Endothelial cell of umbilical vein (primary cell): ENCODE measurements at regions of chr7 and their contacts with region 1.

Region 1: GRCh38 chr7:27662490-27663205 is at the start of gene HIBADH:
- DNase-seq: peak; percentile 99
- H3K4me3 ChIP-seq: peak within 1 kb of the TSS; percentile 63 to 83 (median 69)
- H3K27ac ChIP-seq: peak within 1 kb of the TSS; percentile 74
- H3K4me1 ChIP-seq: peaks cover 7% of the 10 kb centered on the region
- H3K27me3 ChIP-seq: no peaks in the 10 kb centered on the region
- CTCF ChIP-seq: no peak
- POLR2A ChIP-seq: peak; percentile 70
- total RNA-seq, gene HIBADH: 19.7 and 22.6 TPM in 2 replicates

Region 2: DNA sequence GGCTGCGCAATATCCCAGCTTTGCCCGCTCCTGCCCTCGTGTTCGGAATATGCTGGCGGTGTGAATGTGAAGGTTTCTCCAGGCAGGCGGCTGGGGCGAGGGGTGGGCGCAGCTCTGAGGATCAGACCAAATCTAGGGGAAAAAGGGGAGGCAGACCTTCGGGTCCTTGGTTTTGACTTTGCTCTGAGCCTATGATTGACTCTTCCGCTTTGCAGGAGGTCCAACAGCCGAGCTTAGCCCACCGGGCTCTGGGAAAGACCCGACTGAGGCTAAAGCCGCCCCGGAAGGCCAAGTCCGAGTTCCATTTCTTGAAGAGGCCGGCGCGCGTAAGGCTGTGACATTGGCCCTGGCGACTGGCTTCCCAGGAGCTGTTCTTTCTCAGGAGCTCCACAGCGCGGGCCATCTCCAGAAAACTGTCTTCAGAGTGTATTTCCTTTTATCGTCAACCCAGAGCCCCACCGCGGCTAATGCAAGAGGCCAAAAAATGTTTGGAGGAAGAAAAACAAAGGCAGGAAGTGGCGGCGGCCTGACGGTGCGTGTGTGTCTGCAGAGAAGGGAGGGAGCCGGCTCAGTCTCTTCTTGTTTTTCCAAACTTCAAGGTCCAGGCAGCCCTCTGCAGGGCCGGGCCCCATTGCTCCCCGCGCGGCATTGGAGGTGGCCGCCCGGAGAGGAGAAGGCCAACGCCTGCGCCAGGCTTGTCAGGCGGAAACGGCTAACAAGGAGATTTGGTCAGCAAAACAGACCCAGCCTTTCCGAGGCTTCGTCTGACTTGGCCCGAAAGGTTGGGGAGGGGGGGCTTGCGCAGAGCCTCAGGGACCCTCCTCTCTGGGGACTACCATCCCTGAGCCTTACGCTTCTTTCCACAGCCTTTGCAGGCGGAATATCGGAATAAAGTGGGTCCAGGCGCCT is 474.0 kb before region 1 on chr7:
- CTCF ChIA-PET with region 1: no interaction called
- POLR2A ChIA-PET with region 1: no interaction called
- dilution Hi-C with region 1: no loop called
- intact Hi-C with region 1: loop called (anchors 2 kb)
- DNase-seq: peak; percentile 81
- H3K4me3 ChIP-seq: peak overlapping the region; percentile 6 to 48 (median 44)
- H3K27ac ChIP-seq: peak overlapping the region; percentile 90
- H3K4me1 ChIP-seq: peaks cover 50% of the 10 kb centered on the region
- H3K27me3 ChIP-seq: peaks cover 2 to 7% of the 10 kb centered on the region in 2 experiments
- CTCF ChIP-seq: no peak
- POLR2A ChIP-seq: peak; percentile 53

Region 3: DNA sequence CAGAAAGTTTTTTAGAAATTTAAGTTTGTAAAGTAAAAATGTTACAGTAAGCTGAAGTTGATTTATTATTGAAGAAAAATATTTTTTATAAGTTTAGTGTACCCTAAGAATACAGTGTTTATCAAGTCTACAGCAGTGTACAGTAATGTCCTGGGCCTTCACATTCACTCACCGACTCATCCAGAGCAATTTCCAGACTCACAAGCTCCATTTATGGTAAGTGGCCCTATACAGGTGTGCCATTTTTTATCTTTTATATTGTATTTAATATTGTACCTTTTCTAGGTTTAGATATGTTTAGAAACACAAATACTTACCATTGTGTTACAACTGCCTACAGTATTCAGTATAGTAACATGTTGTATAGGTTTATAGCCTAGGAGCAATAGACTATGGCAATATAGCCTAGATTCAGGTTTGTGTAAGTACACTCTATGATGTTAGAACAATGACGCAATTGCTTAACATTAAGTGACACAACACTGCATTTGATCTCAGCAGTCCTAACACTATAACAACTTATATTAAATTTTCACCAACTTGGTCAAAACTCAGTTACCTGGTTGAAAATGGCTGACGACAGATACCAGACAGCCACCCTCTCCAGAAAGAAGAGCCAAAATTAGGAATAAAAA is 45.6 kb before region 1 on chr7:
- CTCF ChIA-PET with region 1: no interaction called
- POLR2A ChIA-PET with region 1: no interaction called
- dilution Hi-C with region 1: no loop called
- intact Hi-C with region 1: no loop called
- DNase-seq: no peak
- H3K4me3 ChIP-seq: no peak overlapping the region
- H3K27ac ChIP-seq: no peak overlapping the region
- H3K4me1 ChIP-seq: no peaks in the 10 kb centered on the region
- H3K27me3 ChIP-seq: no peaks in the 10 kb centered on the region
- CTCF ChIP-seq: no peak
- POLR2A ChIP-seq: no peak

Region 4: GRCh38 chr7:27640914-27641580 is 21.6 kb before region 1 on chr7:
- CTCF ChIA-PET with region 1: interaction called, 3 read pairs
- POLR2A ChIA-PET with region 1: no interaction called
- dilution Hi-C with region 1: no loop called
- intact Hi-C with region 1: loop called (anchors 1 kb)
- DNase-seq: peak; percentile 96
- H3K4me3 ChIP-seq: peak overlapping the region in 1 of 3 experiments; percentile 36
- H3K27ac ChIP-seq: peak overlapping the region; percentile 85
- H3K4me1 ChIP-seq: peaks cover 18% of the 10 kb centered on the region
- H3K27me3 ChIP-seq: no peaks in the 10 kb centered on the region
- CTCF ChIP-seq: no peak
- POLR2A ChIP-seq: no peak

Region 5: GRCh38 chr7:27677912-27678612 is 15.4 kb after region 1 on chr7:
- CTCF ChIA-PET with region 1: interaction called, 6 read pairs
- POLR2A ChIA-PET with region 1: no interaction called
- dilution Hi-C with region 1: no loop called
- intact Hi-C with region 1: loop called (anchors 1 kb)
- DNase-seq: peak; percentile 78
- H3K4me3 ChIP-seq: no peak overlapping the region
- H3K27ac ChIP-seq: peak overlapping the region; percentile 94
- H3K4me1 ChIP-seq: peaks cover 22% of the 10 kb centered on the region
- H3K27me3 ChIP-seq: no peaks in the 10 kb centered on the region
- CTCF ChIP-seq: no peak
- POLR2A ChIP-seq: peak; percentile 25

Region 6: DNA sequence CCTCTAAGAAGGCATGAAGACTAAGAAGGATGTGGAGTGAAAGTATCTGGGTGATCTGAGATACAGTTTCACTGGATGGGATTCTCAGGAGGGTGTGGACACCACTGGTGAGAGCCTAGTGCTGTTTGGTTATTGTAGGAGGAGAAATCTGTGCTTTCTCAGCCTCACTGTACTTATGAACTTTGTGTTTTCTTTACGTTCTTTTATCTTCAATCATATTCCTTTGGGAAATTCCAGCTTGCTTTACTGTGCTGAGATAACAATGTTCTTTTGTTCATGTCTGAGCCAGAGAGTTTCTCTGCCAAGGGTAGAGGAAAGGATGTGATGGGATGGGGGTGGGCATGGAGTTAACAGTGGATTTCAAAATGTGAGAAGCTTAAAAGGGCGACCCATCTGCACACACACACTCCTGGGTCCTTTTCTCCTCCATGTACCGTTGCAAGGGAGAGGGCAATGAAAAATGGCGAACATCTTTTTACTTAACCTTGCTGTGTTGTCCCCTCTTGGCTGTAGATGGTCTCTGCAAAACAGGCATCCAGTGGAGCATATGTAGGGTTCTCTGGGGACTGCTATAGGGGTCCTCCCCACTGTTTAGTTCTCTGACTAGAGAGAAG is 52.3 kb after region 1 on chr7:
- CTCF ChIA-PET with region 1: interaction called, 3 read pairs
- POLR2A ChIA-PET with region 1: no interaction called
- dilution Hi-C with region 1: no loop called
- intact Hi-C with region 1: loop called (anchors 2 kb)
- DNase-seq: peak; percentile 96
- H3K4me3 ChIP-seq: no peak overlapping the region
- H3K27ac ChIP-seq: peak overlapping the region; percentile 50
- H3K4me1 ChIP-seq: peaks cover 19% of the 10 kb centered on the region
- H3K27me3 ChIP-seq: no peaks in the 10 kb centered on the region
- CTCF ChIP-seq: no peak
- POLR2A ChIP-seq: no peak

Region 7: GRCh38 chr7:27739909-27740448 is 77.3 kb after region 1 on chr7 and contains the start of gene TAX1BP1:
- CTCF ChIA-PET with region 1: interaction called, 7 read pairs
- POLR2A ChIA-PET with region 1: interaction called, 3 read pairs
- dilution Hi-C with region 1: no loop called
- intact Hi-C with region 1: loop called (anchors 1 kb)
- DNase-seq: peak; percentile 94
- H3K4me3 ChIP-seq: peak within 1 kb of the TSS; percentile 78 to 83 (median 81)
- H3K27ac ChIP-seq: peak within 1 kb of the TSS; percentile 93
- H3K4me1 ChIP-seq: peaks cover 13% of the 10 kb centered on the region
- H3K27me3 ChIP-seq: no peaks in the 10 kb centered on the region
- CTCF ChIP-seq: no peak
- POLR2A ChIP-seq: peak; percentile 96
- total RNA-seq, gene TAX1BP1: 70.4 and 77.7 TPM in 2 replicates